GM12878 (cell line): ENCODE measurements at regions of chr1 and their contacts with region 1.

Region 1: GRCh38 chr1:154166207-154166606 is 11.3 kb upstream of the NUP210L start:
- DNase-seq: no peak
- ATAC-seq: no peak
- H3K4me3 ChIP-seq: no peak overlapping the region
- H3K27ac ChIP-seq: no peak overlapping the region
- H3K4me1 ChIP-seq: no peaks in the 10 kb centered on the region
- H3K27me3 ChIP-seq: no peaks in the 10 kb centered on the region
- CTCF ChIP-seq: no peak
- EP300 ChIP-seq: no peak
- POLR2A ChIP-seq: no peak
- RAD21 ChIP-seq: no peak

Region 2: GRCh38 chr1:154176337-154176736 is 10.1 kb after region 1 on chr1:
- CTCF ChIA-PET with region 1: interaction called, 4 read pairs
- POLR2A ChIA-PET with region 1: interaction called, 9 read pairs
- RAD21 ChIA-PET with region 1: no interaction called
- SMC1A ChIA-PET with region 1: interaction called, 10 read pairs
- in situ Hi-C with region 1: no loop called
- intact Hi-C with region 1: no loop called
- DNase-seq: no peak
- ATAC-seq: no peak
- H3K4me3 ChIP-seq: no peak overlapping the region
- H3K27ac ChIP-seq: no peak overlapping the region
- H3K4me1 ChIP-seq: peaks cover 17% of the 10 kb centered on the region
- H3K27me3 ChIP-seq: no peaks in the 10 kb centered on the region
- CTCF ChIP-seq: no peak
- EP300 ChIP-seq: no peak
- POLR2A ChIP-seq: no peak
- RAD21 ChIP-seq: no peak

Region 3: DNA sequence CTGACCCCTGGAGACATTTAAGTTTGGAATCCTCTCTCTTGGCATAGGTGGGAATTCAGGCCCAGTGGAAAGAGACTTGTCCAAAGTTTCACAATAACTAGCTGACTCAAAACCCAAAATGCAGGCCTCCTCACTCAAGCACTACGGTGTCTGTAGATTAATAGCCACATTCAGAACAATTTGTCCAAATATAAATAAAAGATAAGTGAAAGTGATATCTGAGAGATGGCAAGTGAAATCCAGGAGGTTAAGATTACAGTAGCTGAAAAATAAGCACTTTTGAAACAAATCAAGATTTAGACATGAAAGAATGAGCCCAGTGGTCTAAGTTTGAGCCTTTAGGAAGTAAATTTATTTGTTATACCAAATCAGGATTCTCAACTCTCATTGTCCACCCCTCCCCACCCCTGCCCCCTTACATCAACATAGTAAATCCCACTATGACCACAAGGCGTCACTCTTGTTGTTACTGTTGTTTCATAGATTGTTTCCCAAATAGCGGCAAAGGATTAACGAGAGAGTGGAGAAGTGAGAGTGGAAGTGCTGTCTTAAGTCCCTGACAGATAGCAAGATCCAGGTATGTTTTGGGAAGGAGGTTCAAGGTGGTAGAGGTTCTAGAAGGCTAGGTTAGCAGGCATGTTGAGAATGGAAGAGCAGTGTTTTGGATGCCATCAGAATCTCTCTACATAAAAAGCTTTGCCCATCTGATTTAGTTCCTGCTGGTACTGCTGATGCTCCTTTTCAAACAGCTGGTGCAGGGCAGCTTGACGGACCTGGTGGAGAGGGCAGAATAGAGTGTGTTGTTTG is 32.8 kb after region 1 on chr1:
- CTCF ChIA-PET with region 1: no interaction called
- POLR2A ChIA-PET with region 1: no interaction called
- RAD21 ChIA-PET with region 1: no interaction called
- SMC1A ChIA-PET with region 1: no interaction called
- in situ Hi-C with region 1: no loop called
- intact Hi-C with region 1: no loop called
- DNase-seq: no peak
- ATAC-seq: peak; percentile 87
- H3K4me3 ChIP-seq: no peak overlapping the region
- H3K27ac ChIP-seq: no peak overlapping the region
- H3K4me1 ChIP-seq: no peaks in the 10 kb centered on the region
- H3K27me3 ChIP-seq: no peaks in the 10 kb centered on the region; a peak in 1 of 4 replicates
- CTCF ChIP-seq: peak; percentile 61 to 71 (median 67)
- EP300 ChIP-seq: no peak
- POLR2A ChIP-seq: no peak
- RAD21 ChIP-seq: peak; percentile 76